H1 (cell line): ENCODE measurements at regions of chr6 and their contacts with region 1.

Region 1: DNA sequence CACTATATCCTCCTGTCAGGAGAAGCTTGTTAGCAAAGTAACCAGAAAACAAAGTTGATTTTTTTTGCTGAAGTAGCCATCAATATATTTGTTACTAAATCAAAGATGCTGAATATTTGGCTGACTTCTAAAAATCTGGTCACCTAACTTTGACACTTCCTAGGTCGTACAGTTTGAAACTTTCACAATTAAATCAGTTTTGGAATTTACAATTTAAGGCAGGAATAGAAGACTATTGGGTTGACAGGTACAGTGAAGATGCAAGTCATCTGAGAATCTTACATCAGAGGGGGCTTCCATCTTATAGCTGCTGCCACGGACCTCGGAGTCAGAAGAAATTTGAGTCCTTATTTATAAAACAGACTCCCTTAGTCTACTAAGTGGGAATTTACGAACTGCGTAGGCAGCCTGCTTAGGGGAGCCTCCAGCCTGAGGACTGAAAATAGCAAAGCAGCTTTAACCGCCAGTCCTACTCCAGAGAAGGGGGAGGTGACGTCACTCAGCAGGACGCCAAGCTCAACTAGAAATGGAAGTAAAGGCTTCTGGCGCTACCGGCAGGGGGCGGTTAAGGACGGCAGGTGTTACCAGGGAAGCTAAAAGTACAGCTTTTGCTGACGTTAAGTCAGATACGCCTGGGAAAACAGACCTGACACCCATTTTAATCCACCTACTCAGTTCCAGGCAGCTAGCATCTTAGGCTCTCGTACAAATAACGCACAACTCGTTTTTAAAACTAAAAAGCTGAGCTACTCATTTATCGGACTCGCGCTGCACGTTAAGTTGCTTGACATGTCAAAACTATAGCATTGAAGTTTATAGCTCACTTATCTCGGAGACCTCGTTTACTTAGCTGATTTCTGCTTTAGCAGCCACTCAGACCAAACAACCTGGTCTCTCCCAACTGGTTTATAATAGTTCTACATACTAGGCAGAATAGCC is 61.1 kb upstream of the HFE start:
- DNase-seq: peak; percentile 90 to 93
- H3K4me3 ChIP-seq: peak overlapping the region; percentile 75 to 89 (median 82)
- H3K27ac ChIP-seq: peak overlapping the region; percentile 80
- H3K4me1 ChIP-seq: peaks cover 3 to 26% (median 10%) of the 10 kb centered on the region in 4 experiments; a peak in 5 of 7 replicates
- H3K27me3 ChIP-seq: no peaks in the 10 kb centered on the region
- CTCF ChIP-seq: peak; percentile 63 to 93 (median 77)
- EP300 ChIP-seq: peak in 1 of 2 experiments; percentile 43; a peak in 1 of 3 replicates
- POLR2A ChIP-seq: peak; percentile 85 to 91; a peak in 2 of 3 replicates
- RAD21 ChIP-seq: peak; percentile 45 to 47

Region 2: DNA sequence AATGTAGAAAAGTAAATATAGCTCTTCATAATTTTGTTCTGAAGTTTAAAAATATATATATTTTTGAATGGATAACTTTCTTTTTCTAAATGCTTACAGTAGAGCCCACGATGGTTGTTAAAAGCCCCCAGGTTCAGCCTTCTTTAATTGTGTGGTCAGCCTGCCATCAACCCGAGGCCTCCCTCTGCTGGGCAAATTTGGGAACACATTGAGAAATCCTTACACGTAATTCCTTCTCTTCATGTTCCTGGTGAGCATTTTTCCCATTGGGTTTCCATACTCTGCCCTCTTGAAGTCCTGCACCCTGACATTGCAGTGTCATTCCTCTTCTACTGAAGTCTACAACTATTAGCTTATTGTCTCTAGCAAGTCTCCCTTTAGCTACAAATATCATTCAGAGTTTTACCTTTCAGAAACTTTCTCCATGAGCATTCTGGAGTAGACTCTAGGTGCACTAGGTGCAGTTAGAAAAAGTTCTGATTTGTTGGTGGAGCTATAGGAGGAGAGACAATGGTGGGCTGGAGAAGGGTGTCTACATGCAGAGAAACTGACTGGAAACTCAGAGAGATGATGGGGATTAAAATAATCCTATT is 23.0 kb before region 1 on chr6:
- CTCF ChIA-PET with region 1: interaction called, 9 read pairs
- POLR2A ChIA-PET with region 1: interaction called, 87 read pairs
- DNase-seq: peak in 1 of 2 experiments; percentile 89
- H3K4me3 ChIP-seq: no peak overlapping the region
- H3K27ac ChIP-seq: no peak overlapping the region
- H3K4me1 ChIP-seq: peaks cover 0 to 16% (median 4%) of the 10 kb centered on the region in 4 experiments; a peak in 4 of 7 replicates
- H3K27me3 ChIP-seq: no peaks in the 10 kb centered on the region
- CTCF ChIP-seq: peak; percentile 56 to 80 (median 75)
- EP300 ChIP-seq: no peak
- POLR2A ChIP-seq: no peak
- RAD21 ChIP-seq: peak; percentile 77 to 83

Region 3: DNA sequence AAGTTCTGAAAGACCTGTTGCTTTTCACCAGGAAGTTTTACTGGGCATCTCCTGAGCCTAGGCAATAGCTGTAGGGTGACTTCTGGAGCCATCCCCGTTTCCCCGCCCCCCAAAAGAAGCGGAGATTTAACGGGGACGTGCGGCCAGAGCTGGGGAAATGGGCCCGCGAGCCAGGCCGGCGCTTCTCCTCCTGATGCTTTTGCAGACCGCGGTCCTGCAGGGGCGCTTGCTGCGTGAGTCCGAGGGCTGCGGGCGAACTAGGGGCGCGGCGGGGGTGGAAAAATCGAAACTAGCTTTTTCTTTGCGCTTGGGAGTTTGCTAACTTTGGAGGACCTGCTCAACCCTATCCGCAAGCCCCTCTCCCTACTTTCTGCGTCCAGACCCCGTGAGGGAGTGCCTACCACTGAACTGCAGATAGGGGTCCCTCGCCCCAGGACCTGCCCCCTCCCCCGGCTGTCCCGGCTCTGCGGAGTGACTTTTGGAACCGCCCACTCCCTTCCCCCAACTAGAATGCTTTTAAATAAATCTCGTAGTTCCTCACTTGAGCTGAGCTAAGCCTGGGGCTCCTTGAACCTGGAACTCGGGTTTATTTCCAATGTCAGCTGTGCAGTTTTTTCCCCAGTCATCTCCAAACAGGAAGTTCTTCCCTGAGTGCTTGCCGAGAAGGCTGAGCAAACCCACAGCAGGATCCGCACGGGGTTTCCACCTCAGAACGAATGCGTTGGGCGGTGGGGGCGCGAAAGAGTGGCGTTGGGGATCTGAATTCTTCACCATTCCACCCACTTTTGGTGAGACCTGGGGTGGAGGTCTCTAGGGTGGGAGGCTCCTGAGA is 61.3 kb after region 1 on chr6 and contains the start of gene HFE:
- CTCF ChIA-PET with region 1: interaction called, 4 read pairs
- POLR2A ChIA-PET with region 1: interaction called, 25 read pairs
- DNase-seq: peak in 1 of 2 experiments; percentile 73
- H3K4me3 ChIP-seq: peak within 1 kb of the TSS; percentile 48 to 65 (median 62)
- H3K27ac ChIP-seq: no peak within 1 kb of the TSS
- H3K4me1 ChIP-seq: peaks cover 0 to 5% (median 1%) of the 10 kb centered on the region in 4 experiments; a peak in 3 of 7 replicates
- H3K27me3 ChIP-seq: no peaks in the 10 kb centered on the region
- CTCF ChIP-seq: peak in 1 of 3 experiments; percentile 1; a peak in 1 of 4 replicates
- EP300 ChIP-seq: no peak
- POLR2A ChIP-seq: peak in 1 of 2 experiments; percentile 55; a peak in 1 of 3 replicates
- RAD21 ChIP-seq: no peak
- total RNA-seq, gene HFE: 1.6 and 2.0 TPM in 2 replicates

Region 4: GRCh38 chr6:26223650-26224546 is 197.7 kb after region 1 on chr6:
- CTCF ChIA-PET with region 1: no interaction called
- POLR2A ChIA-PET with region 1: interaction called, 113 read pairs
- DNase-seq: no peak
- H3K4me3 ChIP-seq: peak overlapping the region; percentile 61 to 94 (median 76)
- H3K27ac ChIP-seq: peak overlapping the region; percentile 91
- H3K4me1 ChIP-seq: peaks cover 0 to 7% (median 3%) of the 10 kb centered on the region in 4 experiments; a peak in 5 of 7 replicates
- H3K27me3 ChIP-seq: no peaks in the 10 kb centered on the region
- CTCF ChIP-seq: no peak
- EP300 ChIP-seq: no peak
- POLR2A ChIP-seq: peak; percentile 48 to 76; a peak in 2 of 3 replicates
- RAD21 ChIP-seq: no peak